Naive thymus-derived CD4-positive, alpha-beta T cell (primary cell): ENCODE measurements at regions of chr17 and their contacts with region 1.

Region 1: DNA sequence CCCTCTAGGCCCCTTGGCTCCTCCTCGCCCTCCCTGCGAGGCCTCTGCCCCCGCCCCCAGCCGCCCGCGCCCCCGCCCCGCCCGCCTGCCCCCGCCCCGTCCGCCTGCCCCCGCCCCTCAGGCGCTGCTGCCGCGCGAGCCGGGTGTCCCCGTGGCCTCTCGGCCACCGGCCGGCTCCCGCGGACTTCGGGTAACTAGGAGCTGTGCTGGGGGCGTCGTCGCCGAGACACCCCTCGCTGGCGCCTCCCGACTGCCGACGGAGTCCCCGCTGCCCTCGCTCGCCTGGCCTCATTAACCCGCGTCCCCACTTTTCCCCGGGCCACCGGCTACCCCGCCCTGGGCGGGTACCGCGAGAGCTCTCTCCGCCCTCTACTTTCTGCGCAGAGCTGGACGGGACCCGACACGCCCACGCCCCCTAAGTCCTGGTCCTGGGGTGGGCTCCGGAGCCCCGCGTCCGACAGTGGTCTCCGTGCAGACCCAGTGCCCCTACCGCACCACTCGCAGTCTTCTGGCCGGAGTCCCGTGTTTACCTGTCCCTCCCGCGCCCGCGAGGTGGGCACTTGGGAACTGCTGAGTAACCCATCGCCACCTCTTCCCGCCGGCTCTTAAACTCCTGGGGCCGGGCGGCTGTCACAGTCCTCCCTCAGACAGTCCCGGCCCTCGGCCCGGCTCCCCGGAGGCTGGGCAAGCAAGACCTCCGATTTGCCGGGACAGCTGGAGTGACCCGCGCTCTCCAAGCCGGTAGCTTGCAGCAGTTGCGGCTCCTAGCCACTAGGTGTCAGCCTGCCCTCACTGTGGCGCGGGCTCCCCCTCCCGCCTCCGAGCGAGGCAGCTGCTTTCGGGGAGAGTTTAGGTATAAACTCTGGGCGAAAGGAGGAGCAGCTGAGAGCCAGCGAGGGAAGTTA is at the start of gene TLCD1:
- DNase-seq: peak; percentile 79 to 93 (median 87)
- ATAC-seq: peak; percentile 65
- H3K4me3 ChIP-seq: peak within 1 kb of the TSS; percentile 83
- H3K4me3 Mint-ChIP-seq: peak within 1 kb of the TSS; percentile 82 to 98 (median 96)
- H3K27ac ChIP-seq: peak within 1 kb of the TSS; percentile 100
- H3K27ac Mint-ChIP-seq: peak within 1 kb of the TSS; percentile 93 to 100 (median 98)
- H3K4me1 ChIP-seq: peaks cover 27 to 37% of the 10 kb centered on the region in 2 donors
- H3K4me1 Mint-ChIP-seq: peaks cover 12 to 63% (median 52%) of the 10 kb centered on the region in 7 donors
- H3K27me3 ChIP-seq: no peaks in the 10 kb centered on the region
- H3K27me3 Mint-ChIP-seq: no peaks in the 10 kb centered on the region
- total RNA-seq, gene TLCD1: 0.69 to 3.0 (median 0.79) TPM in 3 of 5 experiments, not detected in the others

Region 2: GRCh38 chr17:28335201-28335955 is 391.1 kb before region 1 on chr17 and contains the starts of genes IFT20 and TNFAIP1:
- CTCF ChIA-PET with region 1: no interaction called
- POLR2A ChIA-PET with region 1: no interaction called
- intact Hi-C with region 1: loop called in 1 of 2 experiments (anchors 2 kb)
- DNase-seq: peak; percentile 86 to 100 (median 98)
- ATAC-seq: peak; percentile 98
- H3K4me3 ChIP-seq: peak within 1 kb of the TSS; percentile 79
- H3K4me3 Mint-ChIP-seq: peak within 1 kb of the TSS; percentile 86 to 99 (median 97)
- H3K27ac ChIP-seq: peak within 1 kb of the TSS; percentile 95
- H3K27ac Mint-ChIP-seq: peak within 1 kb of the TSS; percentile 91 to 98 (median 97)
- H3K4me1 ChIP-seq: peaks cover 16 to 19% of the 10 kb centered on the region in 2 donors
- H3K4me1 Mint-ChIP-seq: peaks cover 31 to 63% (median 59%) of the 10 kb centered on the region in 7 donors
- H3K27me3 ChIP-seq: no peaks in the 10 kb centered on the region
- H3K27me3 Mint-ChIP-seq: no peaks in the 10 kb centered on the region
- total RNA-seq, gene IFT20: 24.7 to 56.2 (median 37.0) TPM
- total RNA-seq, gene TNFAIP1: 8.0 to 26.9 (median 25.9) TPM

Region 3: GRCh38 chr17:28545787-28546415 is 180.6 kb before region 1 on chr17:
- CTCF ChIA-PET with region 1: no interaction called
- POLR2A ChIA-PET with region 1: no interaction called
- intact Hi-C with region 1: no loop called
- DNase-seq: no peak
- ATAC-seq: no peak
- H3K4me3 ChIP-seq: no peak overlapping the region
- H3K4me3 Mint-ChIP-seq: no peak overlapping the region
- H3K27ac ChIP-seq: no peak overlapping the region
- H3K27ac Mint-ChIP-seq: peak overlapping the region in 6 of 9 donors; percentile 19 to 74 (median 58)
- H3K4me1 ChIP-seq: peaks cover 22 to 33% of the 10 kb centered on the region in 2 donors
- H3K4me1 Mint-ChIP-seq: peaks cover 24 to 44% (median 36%) of the 10 kb centered on the region in 7 donors
- H3K27me3 ChIP-seq: no peaks in the 10 kb centered on the region
- H3K27me3 Mint-ChIP-seq: no peaks in the 10 kb centered on the region

Region 4: GRCh38 chr17:28743225-28744103 is 17.0 kb after region 1 on chr17 and contains the start of gene TRAF4:
- CTCF ChIA-PET with region 1: interaction called, 331 read pairs
- POLR2A ChIA-PET with region 1: interaction called, 269 read pairs
- intact Hi-C with region 1: loop called (anchors 1 kb)
- DNase-seq: peak; percentile 60 to 86 (median 73)
- ATAC-seq: peak; percentile 93
- H3K4me3 ChIP-seq: peak within 1 kb of the TSS; percentile 82
- H3K4me3 Mint-ChIP-seq: peak within 1 kb of the TSS; percentile 87 to 94 (median 91)
- H3K27ac ChIP-seq: peak within 1 kb of the TSS; percentile 83
- H3K27ac Mint-ChIP-seq: peak within 1 kb of the TSS; percentile 78 to 95 (median 92)
- H3K4me1 ChIP-seq: peaks cover 11 to 28% of the 10 kb centered on the region in 2 donors
- H3K4me1 Mint-ChIP-seq: peaks cover 2 to 42% (median 27%) of the 10 kb centered on the region in 7 donors
- H3K27me3 ChIP-seq: no peaks in the 10 kb centered on the region
- H3K27me3 Mint-ChIP-seq: no peaks in the 10 kb centered on the region
- total RNA-seq, gene TRAF4: 22.3 to 228 (median 81.6) TPM

Region 5: DNA sequence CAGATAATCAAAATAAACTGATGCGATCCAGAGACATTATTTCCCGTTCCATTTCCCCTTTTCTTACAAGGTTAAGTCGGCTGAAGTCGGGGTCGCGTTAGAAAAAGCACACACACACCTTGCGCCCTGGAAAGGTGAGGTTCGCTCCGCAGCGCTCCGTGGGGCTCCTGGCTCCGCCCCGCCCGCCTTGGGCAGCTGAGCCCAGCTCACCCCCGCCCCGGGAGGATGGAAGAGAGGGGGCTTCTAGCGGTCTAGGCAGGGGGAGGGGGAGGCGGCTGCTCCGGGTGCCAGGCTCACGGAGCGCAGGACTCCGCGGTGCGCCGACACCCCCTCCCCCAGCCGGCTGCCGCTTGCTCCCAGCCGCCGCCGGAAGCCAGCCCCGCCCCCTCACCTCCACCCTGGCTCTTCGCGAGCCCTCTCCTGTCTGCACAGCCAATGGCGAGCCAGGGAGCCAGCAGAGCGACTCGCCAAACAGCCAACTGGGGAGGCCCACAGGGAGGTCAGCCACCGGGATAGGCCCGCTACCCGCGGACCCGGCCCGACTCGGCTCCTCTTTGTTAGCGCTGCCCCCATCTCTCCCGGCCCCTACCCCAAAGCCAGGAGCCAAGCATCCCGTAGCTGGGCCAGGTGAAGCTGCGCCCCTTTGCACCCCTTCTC is 85.7 kb after region 1 on chr17:
- CTCF ChIA-PET with region 1: interaction called, 6 read pairs
- POLR2A ChIA-PET with region 1: interaction called, 3 read pairs
- intact Hi-C with region 1: loop called (anchors 1 to 2 kb)
- DNase-seq: peak; percentile 91 to 97 (median 95)
- ATAC-seq: peak; percentile 100
- H3K4me3 ChIP-seq: peak overlapping the region; percentile 85
- H3K4me3 Mint-ChIP-seq: peak overlapping the region; percentile 87 to 99 (median 92)
- H3K27ac ChIP-seq: peak overlapping the region; percentile 96
- H3K27ac Mint-ChIP-seq: peak overlapping the region; percentile 82 to 100 (median 97)
- H3K4me1 ChIP-seq: peaks cover 0 to 16% of the 10 kb centered on the region in 2 donors
- H3K4me1 Mint-ChIP-seq: peaks cover 21 to 49% (median 40%) of the 10 kb centered on the region in 7 donors
- H3K27me3 ChIP-seq: no peaks in the 10 kb centered on the region
- H3K27me3 Mint-ChIP-seq: no peaks in the 10 kb centered on the region

Region 6: DNA sequence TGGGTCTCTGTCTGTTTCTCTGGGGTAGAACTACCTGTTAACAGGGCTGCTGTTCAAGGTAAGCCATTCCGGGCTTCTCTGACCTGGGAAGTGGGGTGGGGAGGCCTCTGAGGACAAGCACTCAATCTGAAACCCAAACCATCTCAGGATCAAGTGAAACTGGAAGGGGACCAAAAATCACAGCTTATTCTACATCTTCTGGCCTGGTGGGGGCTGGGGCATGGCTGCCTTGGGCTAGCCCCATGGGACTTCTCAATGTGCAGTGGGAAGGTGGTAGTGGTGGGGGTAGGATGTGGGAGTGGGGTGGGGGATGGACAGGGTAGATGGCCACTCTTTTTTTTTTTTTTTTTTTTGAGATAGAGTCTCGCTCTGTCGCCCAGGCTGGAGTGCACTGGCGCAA is 165.5 kb after region 1 on chr17:
- CTCF ChIA-PET with region 1: interaction called, 5 read pairs
- POLR2A ChIA-PET with region 1: interaction called, 35 read pairs
- intact Hi-C with region 1: loop called in 1 of 2 experiments (anchors 1 kb)
- DNase-seq: no peak
- ATAC-seq: no peak
- H3K4me3 ChIP-seq: no peak overlapping the region
- H3K4me3 Mint-ChIP-seq: peak overlapping the region in 8 of 10 donors; percentile 25 to 62 (median 42)
- H3K27ac ChIP-seq: peak overlapping the region; percentile 78
- H3K27ac Mint-ChIP-seq: peak overlapping the region; percentile 74 to 99 (median 92)
- H3K4me1 ChIP-seq: peaks cover 17 to 34% of the 10 kb centered on the region in 2 donors
- H3K4me1 Mint-ChIP-seq: peaks cover 32 to 81% (median 62%) of the 10 kb centered on the region in 7 donors
- H3K27me3 ChIP-seq: no peaks in the 10 kb centered on the region
- H3K27me3 Mint-ChIP-seq: no peaks in the 10 kb centered on the region

Region 7: DNA sequence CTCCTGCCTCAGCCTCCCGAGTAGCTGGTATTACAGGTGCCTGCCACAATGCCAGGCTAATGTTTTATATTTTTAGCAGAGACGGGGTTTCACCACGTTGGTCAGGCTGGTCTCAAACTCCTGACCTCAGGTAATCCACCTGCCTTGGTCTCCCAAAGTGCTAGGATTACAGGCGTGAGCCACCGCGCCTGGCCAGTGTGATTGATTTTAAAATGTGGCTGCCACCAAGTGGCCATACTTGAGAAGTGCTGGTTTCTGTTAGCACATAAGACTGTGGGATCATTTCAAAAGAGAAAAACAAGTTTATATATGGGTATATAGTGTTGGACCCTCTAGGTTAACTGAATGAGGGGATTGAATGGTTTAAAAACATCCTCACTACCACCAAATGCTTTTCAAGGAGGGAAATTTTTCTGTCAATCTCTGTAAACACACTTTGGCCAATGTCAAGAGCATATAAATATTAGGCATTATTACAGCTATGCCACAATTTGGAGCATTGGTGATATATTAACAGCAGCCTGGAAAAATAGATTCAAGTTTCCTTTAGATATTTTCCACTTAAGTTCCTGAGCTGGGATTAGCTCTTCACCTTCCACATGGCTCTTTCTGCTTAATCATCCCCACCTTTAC is 189.9 kb after region 1 on chr17:
- CTCF ChIA-PET with region 1: interaction called, 12 read pairs
- POLR2A ChIA-PET with region 1: interaction called, 3 read pairs
- intact Hi-C with region 1: loop called (anchors 1 to 2 kb)
- DNase-seq: peak in 6 of 9 donors; percentile 38 to 50 (median 42)
- ATAC-seq: peak; percentile 90
- H3K4me3 ChIP-seq: no peak overlapping the region
- H3K4me3 Mint-ChIP-seq: no peak overlapping the region
- H3K27ac ChIP-seq: peak overlapping the region; percentile 46
- H3K27ac Mint-ChIP-seq: peak overlapping the region in 7 of 9 donors; percentile 46 to 93 (median 65)
- H3K4me1 ChIP-seq: no peaks in the 10 kb centered on the region
- H3K4me1 Mint-ChIP-seq: peaks cover 0 to 9% (median 6%) of the 10 kb centered on the region in 7 donors
- H3K27me3 ChIP-seq: no peaks in the 10 kb centered on the region
- H3K27me3 Mint-ChIP-seq: no peaks in the 10 kb centered on the region

Region 8: GRCh38 chr17:29116804-29117772 is 390.6 kb after region 1 on chr17:
- CTCF ChIA-PET with region 1: interaction called, 16 read pairs
- POLR2A ChIA-PET with region 1: no interaction called
- intact Hi-C with region 1: loop called (anchors 1 kb)
- DNase-seq: peak; percentile 49 to 81 (median 69)
- ATAC-seq: peak; percentile 89
- H3K4me3 ChIP-seq: no peak overlapping the region
- H3K4me3 Mint-ChIP-seq: peak overlapping the region in 1 of 10 donors; percentile 44
- H3K27ac ChIP-seq: no peak overlapping the region
- H3K27ac Mint-ChIP-seq: peak overlapping the region in 5 of 9 donors; percentile 54 to 74 (median 61)
- H3K4me1 ChIP-seq: no peaks in the 10 kb centered on the region
- H3K4me1 Mint-ChIP-seq: peaks cover 0 to 11% (median 5%) of the 10 kb centered on the region in 7 donors
- H3K27me3 ChIP-seq: no peaks in the 10 kb centered on the region
- H3K27me3 Mint-ChIP-seq: no peaks in the 10 kb centered on the region